ENCODE measurements at regions of chr9 and their contacts with region 1.

Region 1: DNA sequence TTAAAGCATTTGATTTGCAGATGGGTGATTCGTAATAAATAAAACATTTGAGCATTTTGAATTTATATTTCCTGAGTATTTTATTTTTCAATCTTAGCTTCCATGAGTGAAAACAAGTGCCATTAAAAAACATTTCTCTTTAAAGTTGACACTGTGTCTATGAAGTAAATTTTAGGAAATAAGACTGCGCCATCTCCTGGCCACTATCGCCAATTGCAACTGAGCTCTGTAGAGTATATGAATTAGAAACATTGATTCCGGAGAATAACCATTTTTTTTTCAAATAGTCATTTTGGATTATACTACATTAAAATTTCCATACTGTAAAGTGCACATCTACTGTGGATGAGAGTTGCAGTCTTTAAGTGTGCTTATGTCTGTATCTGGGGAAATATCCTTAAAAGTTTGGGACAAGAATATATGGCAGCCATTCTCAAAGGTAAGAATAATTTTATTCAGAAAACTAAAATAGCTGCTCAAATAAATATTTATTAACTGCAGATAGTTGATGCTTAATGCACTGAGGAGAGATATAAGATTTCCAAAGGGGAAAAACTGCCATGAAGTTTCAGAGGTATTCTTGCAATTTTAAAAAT is 5.9 kb downstream of the DMRTA1 start:
- DNase-seq: peak in 3 of 6 donors; percentile 40 to 69 (median 49)
- ATAC-seq: peak in 3 of 4 donors; percentile 56 to 63 (median 56)
- H3K4me3 ChIP-seq: no peak overlapping the region
- H3K27ac ChIP-seq: no peak overlapping the region
- H3K4me1 ChIP-seq: peaks cover 6 to 16% (median 14%) of the 10 kb centered on the region in 3 donors
- H3K27me3 ChIP-seq: no peaks in the 10 kb centered on the region
- CTCF ChIP-seq: peak; percentile 59 to 75 (median 64)

Region 2: DNA sequence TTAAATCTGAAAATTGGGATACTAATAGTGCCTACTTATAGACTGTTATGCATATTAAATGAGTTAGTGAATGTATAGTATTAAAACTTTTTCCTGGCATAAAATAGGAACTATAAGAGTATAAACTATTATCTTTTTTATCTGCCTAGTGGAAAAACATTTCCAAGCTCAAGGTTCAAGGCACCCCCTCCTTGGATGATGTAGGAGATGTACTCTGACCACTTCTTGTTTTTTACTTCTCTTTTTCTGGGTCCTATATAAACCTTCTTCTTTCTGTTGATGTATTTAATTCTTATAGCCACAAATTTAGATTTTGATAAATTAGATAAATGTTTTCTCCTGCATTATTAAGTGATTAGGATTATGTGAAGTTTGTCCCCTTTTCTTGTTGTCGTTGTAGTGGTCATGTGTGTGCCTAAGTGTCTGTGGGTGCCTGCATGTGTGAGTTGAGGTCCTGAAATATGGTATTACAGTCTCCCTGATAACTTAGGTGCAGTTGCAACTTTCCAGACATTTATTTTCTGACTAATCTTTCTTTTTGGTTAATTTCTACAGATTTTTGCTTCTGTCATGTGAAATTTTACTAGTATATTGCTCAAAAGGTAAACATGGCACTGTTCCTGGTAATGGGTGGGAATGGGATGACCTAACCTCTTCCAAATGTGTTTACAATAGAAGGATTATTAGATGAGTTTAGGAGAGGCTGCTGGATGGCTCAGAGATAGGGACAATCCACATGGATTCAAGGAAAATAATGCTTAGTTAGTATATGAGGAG is 282.6 kb before region 1 on chr9:
- intact Hi-C with region 1: no loop called
- DNase-seq: no peak
- ATAC-seq: peak in 2 of 4 donors; percentile 43 to 60
- H3K4me3 ChIP-seq: no peak overlapping the region
- H3K27ac ChIP-seq: no peak overlapping the region
- H3K4me1 ChIP-seq: no peaks in the 10 kb centered on the region
- H3K27me3 ChIP-seq: peaks cover 0 to 4% (median 0%) of the 10 kb centered on the region in 4 donors
- CTCF ChIP-seq: no peak

Region 3: GRCh38 chr9:22307013-22307711 is 145.4 kb before region 1 on chr9:
- intact Hi-C with region 1: loop called in 1 of 3 experiments (anchors 5 kb)
- DNase-seq: peak in 3 of 6 donors; percentile 7 to 41 (median 28)
- ATAC-seq: peak; percentile 63 to 88 (median 86)
- H3K4me3 ChIP-seq: no peak overlapping the region
- H3K27ac ChIP-seq: no peak overlapping the region
- H3K4me1 ChIP-seq: no peaks in the 10 kb centered on the region
- H3K27me3 ChIP-seq: no peaks in the 10 kb centered on the region
- CTCF ChIP-seq: peak; percentile 18 to 48 (median 48)

Region 4: DNA sequence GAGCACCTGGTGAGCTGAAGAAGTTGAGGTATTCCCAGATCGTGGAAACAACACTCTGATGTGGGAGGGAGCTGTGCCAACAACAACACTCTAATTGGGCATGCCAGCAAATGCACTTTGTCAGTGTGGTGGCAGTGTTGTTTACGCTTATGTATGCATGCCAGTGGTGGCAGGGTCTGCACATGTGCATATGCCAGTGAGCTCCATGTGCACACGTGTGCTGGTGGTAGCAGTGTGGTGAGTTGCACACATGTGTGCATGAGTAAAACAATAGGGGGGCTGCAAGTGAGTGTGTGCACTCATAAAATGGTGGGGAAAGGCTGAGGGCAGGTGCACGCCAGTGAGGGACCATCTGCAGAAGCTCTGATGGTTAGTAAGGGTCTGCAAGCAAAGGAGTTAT is 128.3 kb after region 1 on chr9:
- intact Hi-C with region 1: no loop called
- DNase-seq: no peak
- ATAC-seq: no peak
- H3K4me3 ChIP-seq: no peak overlapping the region
- H3K27ac ChIP-seq: no peak overlapping the region
- H3K4me1 ChIP-seq: no peaks in the 10 kb centered on the region
- H3K27me3 ChIP-seq: no peaks in the 10 kb centered on the region
- CTCF ChIP-seq: no peak

Region 5: GRCh38 chr9:22731786-22732185 is 279.3 kb after region 1 on chr9:
- intact Hi-C with region 1: no loop called
- DNase-seq: no peak
- ATAC-seq: no peak
- H3K4me3 ChIP-seq: no peak overlapping the region
- H3K27ac ChIP-seq: no peak overlapping the region
- H3K4me1 ChIP-seq: no peaks in the 10 kb centered on the region
- H3K27me3 ChIP-seq: no peaks in the 10 kb centered on the region
- CTCF ChIP-seq: no peak